ENCODE measurements at regions of chr1 and their contacts with region 1.

Region 1: DNA sequence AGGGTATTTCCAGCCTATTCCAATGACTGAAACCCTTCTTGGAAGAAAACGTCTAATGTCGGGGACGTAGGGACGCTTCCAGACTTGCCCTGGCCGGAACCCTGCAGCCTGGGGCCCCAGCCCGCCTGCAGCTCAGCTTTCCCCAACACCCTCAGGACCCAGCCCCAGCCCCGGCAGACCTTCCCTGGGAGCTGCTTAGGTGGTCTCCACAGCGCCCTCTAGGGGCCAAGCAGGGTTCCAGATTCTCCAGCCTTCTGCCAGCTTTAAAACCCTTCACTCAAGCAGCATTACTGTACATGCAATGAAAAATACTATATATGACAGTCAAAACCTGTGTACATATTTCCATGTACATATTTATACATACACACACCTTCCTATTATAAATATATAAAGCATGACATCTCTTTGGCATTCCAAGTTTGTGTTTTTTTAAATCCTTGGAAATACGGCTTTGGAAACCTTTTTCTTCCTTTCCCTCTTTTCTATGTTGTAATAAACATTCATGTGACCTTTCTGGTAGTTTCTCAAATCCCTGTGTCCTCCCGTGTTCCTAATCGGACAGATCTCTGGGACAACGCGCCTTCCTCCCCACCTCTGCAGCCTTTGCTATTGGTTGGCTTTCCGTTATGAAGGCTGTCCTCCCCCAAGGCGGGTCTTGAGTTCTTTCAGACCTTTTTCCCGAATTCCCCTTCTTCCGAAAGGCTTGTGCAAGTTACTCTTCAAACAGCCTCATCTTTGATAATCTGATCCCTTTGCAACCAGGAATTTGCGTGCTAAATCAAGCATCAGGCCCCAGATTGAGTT is 60.3 kb downstream of the STUM start:
- DNase-seq: no peak
- H3K4me3 ChIP-seq: no peak overlapping the region
- H3K27ac ChIP-seq: no peak overlapping the region
- H3K4me1 ChIP-seq: peaks cover 15 to 34% (median 30%) of the 10 kb centered on the region in 4 donors
- H3K27me3 ChIP-seq: no peaks in the 10 kb centered on the region
- CTCF ChIP-seq: peak; percentile 76 to 90 (median 82)
- EP300 ChIP-seq: no peak
- POLR2A ChIP-seq: no peak

Region 2: GRCh38 chr1:226424228-226425003 is 184.5 kb before region 1 on chr1:
- intact Hi-C with region 1: loop called (anchors 5 kb)
- DNase-seq: no peak
- H3K4me3 ChIP-seq: no peak overlapping the region
- H3K27ac ChIP-seq: no peak overlapping the region
- H3K4me1 ChIP-seq: peaks cover 0 to 18% (median 13%) of the 10 kb centered on the region in 4 donors
- H3K27me3 ChIP-seq: no peaks in the 10 kb centered on the region
- CTCF ChIP-seq: peak; percentile 56 to 70 (median 69)
- EP300 ChIP-seq: no peak
- POLR2A ChIP-seq: no peak

Region 3: DNA sequence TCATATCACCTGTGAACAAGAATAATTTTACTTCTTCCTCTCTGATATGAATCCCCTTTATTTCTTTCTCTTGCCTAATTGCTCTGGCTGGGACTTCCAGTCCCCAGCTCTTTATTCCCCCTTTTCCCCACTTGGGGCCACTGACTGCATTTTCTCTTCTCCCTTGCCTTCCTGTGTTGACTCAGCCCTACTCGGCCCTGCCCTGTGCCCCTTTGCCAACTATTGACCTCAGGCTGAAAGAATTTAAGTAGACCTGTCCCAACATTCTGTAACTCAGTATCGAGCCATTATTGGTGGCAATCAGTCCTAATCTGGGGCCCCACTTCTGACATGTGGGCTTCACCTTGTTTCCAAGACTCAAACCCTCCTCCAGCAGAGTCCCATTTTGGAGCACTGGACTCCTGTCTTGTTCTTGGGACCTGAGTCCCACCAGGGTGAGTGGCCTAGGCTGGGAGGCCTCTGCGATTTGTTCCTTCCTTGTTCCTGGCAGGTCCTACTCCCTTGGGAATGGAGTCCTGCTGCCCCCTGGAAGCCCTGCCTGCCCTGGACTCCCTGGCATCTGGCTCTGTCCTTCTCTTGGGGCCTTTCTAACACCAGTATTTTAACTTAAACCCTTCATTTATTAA is 120.9 kb before region 1 on chr1:
- intact Hi-C with region 1: no loop called
- DNase-seq: no peak
- H3K4me3 ChIP-seq: no peak overlapping the region
- H3K27ac ChIP-seq: no peak overlapping the region
- H3K4me1 ChIP-seq: no peaks in the 10 kb centered on the region
- H3K27me3 ChIP-seq: peaks cover 0 to 20% (median 0%) of the 10 kb centered on the region in 4 donors
- CTCF ChIP-seq: no peak
- EP300 ChIP-seq: no peak
- POLR2A ChIP-seq: no peak

Region 4: DNA sequence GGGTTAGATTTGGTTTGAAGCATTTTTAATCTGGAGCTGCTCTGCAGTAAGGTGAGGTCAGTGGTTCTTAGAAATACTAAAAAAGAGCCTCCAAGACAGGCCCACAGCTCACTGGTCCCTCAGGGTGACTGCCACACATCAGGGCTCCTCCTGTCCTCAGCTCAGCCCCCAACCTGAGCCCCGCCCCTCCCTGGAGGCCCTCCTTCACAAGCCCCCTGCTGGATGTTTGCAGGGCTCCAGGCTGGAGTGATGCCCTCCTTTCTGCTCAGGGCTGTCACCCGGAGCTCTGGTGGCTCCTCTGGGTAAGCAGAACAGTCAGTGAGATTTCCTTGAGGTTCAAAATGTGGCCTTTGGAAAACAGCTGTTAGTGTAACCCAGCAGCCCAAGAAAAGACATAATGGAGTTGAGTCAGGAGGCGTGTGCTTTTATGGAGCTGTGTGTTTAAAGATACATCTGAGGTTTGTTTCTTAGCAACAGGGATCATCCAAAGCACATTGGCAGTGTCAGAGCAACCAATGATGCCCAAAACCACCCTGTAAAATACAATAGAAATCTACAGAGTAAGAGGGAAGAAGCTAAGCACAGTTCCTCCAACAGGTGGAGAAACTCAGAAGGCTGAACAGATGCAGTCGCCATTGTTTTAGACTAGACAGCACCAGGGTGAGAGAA is 38.9 kb before region 1 on chr1:
- intact Hi-C with region 1: no loop called
- DNase-seq: no peak
- H3K4me3 ChIP-seq: no peak overlapping the region
- H3K27ac ChIP-seq: peak overlapping the region; percentile 77 to 81 (median 78)
- H3K4me1 ChIP-seq: peaks cover 13 to 71% (median 55%) of the 10 kb centered on the region in 4 donors
- H3K27me3 ChIP-seq: no peaks in the 10 kb centered on the region
- CTCF ChIP-seq: peak in 1 of 3 experiments; percentile 27
- EP300 ChIP-seq: no peak
- POLR2A ChIP-seq: no peak

Measured in esophagus muscularis mucosa (tissue), 4 donors.